ENCODE measurements at regions of chr6 and their contacts with region 1.

Region 1: DNA sequence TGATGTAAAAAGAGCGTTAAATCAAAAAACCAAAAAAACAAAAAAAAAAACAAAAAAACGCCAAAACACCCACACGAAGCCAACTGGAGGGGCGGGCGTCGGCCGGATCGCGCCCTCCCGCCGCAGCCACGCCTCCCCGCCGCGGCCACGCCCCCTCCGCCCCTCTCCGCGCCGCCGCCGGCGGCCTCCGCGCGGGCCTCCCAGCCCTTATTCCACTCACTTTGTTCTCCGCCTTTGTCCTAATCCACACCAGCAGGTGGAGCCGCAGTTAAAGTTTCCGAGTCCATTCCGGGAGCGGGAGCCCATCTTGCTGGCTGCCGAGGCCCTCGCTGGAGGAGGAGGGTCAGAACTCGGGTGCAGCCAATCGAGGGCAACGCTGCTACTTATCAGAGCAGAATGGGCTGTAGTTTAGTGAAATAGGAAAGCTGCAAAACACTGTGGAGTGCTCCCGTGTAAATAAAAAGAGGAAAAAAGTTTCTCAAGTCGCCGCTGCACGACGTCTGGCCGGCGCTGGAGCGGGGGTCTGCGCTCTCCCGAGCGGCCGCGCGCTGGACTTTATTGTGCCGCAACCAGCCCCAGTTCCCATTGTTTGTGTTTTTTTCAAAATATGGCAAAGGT is at the start of gene ASF1A:
- DNase-seq: peak; percentile 97
- ATAC-seq: peak; percentile 85
- H3K4me3 Mint-ChIP-seq: peak within 1 kb of the TSS; percentile 84
- H3K27ac Mint-ChIP-seq: peak within 1 kb of the TSS; percentile 98
- H3K4me1 Mint-ChIP-seq: peaks cover 50% of the 10 kb centered on the region
- H3K27me3 Mint-ChIP-seq: no peaks in the 10 kb centered on the region
- total RNA-seq, gene ASF1A: 21.2 to 28.6 TPM

Region 2: GRCh38 chr6:118283766-118284165 is 610.1 kb before region 1 on chr6:
- CTCF ChIA-PET with region 1: no interaction called
- POLR2A ChIA-PET with region 1: no interaction called
- intact Hi-C with region 1: loop called in 1 of 2 experiments (anchors 10 kb)
- DNase-seq: peak; percentile 65
- ATAC-seq: peak; percentile 61
- H3K4me3 Mint-ChIP-seq: no peak overlapping the region
- H3K27ac Mint-ChIP-seq: no peak overlapping the region
- H3K4me1 Mint-ChIP-seq: peaks cover 2% of the 10 kb centered on the region
- H3K27me3 Mint-ChIP-seq: peaks cover 4% of the 10 kb centered on the region

Region 3: DNA sequence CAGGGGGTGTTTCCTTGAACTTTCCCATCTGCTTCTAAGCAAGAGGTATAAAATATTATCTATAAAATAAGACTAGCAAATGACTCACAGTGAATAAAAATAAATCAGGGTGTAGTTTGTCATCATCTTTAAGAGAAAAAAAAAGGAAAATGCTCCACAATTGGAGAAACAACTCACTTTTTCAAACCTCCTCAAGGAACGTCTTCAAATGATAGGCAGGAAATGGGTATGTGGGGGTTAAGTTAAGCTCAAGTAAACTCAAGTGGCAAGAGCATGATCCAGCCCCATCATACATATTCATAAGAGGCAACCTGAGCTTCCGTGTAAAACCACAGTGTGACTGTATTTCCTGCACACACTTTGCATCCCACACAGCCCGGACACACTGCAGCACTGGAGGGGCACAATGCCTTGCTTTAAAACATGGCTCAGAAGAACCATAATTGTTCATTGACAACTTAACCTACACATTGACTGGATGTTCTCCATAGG is 184.0 kb before region 1 on chr6:
- CTCF ChIA-PET with region 1: interaction called, 6 read pairs
- POLR2A ChIA-PET with region 1: interaction called, 8 read pairs
- intact Hi-C with region 1: loop called (anchors 1 kb)
- DNase-seq: peak; percentile 87
- ATAC-seq: peak; percentile 81
- H3K4me3 Mint-ChIP-seq: peak overlapping the region; percentile 85
- H3K27ac Mint-ChIP-seq: peak overlapping the region; percentile 91
- H3K4me1 Mint-ChIP-seq: peaks cover 76% of the 10 kb centered on the region
- H3K27me3 Mint-ChIP-seq: no peaks in the 10 kb centered on the region

Region 4: DNA sequence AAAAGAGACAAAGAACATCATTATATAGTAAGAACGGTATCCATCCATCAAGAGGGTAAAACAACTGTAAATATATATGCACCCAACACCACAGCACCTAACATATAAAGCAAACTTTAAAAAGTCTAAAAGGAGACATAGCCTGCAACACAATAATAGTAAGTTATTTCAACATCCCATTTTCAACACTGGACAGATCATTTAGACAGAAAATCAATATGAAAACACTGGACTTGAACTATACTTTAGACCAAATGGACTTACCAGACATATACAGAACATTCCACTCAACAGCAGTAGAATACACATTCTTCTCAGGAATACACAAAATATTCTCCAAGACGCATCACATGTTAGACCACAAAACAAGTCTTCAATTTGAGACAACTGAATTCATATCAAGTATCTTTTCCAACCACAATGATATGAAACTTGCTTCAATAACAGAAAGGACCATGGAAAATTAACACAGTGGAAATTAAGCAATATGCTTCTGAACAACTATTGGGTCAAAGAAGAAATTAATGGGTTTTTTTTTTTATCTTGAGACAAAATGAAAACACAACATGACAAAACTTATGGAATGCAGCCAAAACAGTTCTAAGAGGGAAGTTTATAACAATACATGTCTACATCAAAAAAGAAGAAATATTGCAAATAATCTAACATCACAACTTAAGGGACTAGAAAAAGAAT is 23.9 kb before region 1 on chr6:
- CTCF ChIA-PET with region 1: interaction called, 3 read pairs
- POLR2A ChIA-PET with region 1: no interaction called
- intact Hi-C with region 1: loop called in 1 of 2 experiments (anchors 2 kb)
- DNase-seq: no peak
- ATAC-seq: peak; percentile 16
- H3K4me3 Mint-ChIP-seq: no peak overlapping the region
- H3K27ac Mint-ChIP-seq: no peak overlapping the region
- H3K4me1 Mint-ChIP-seq: peaks cover 30% of the 10 kb centered on the region
- H3K27me3 Mint-ChIP-seq: no peaks in the 10 kb centered on the region

Region 5: GRCh38 chr6:118921084-118921483 is 27.2 kb after region 1 on chr6:
- CTCF ChIA-PET with region 1: interaction called, 6 read pairs
- POLR2A ChIA-PET with region 1: interaction called, 13 read pairs
- intact Hi-C with region 1: no loop called
- DNase-seq: no peak
- ATAC-seq: no peak
- H3K4me3 Mint-ChIP-seq: no peak overlapping the region
- H3K27ac Mint-ChIP-seq: no peak overlapping the region
- H3K4me1 Mint-ChIP-seq: peaks cover 3% of the 10 kb centered on the region
- H3K27me3 Mint-ChIP-seq: no peaks in the 10 kb centered on the region

Region 6: DNA sequence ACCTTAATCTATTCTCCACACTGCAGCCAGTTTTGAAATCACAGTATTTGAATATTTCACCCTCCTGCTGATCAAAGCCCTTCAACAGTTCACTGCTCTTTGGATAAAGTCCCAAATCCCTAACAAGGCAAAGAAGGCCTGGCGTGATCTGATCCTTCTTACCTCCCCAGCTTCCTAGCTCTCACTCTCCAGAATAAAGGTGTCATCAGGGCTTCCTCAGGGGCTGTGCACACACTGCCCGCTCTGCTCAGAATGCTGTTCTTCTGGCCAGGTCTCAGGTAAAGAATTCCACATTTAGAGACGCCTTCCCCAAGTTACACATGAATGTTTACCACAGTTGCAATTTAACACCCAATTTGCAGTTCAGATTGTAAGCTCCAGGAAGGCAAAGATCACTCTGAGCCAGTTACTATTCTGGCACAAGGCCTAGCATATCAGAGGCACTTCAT is 99.9 kb after region 1 on chr6:
- CTCF ChIA-PET with region 1: no interaction called
- POLR2A ChIA-PET with region 1: no interaction called
- intact Hi-C with region 1: no loop called
- DNase-seq: no peak
- ATAC-seq: no peak
- H3K4me3 Mint-ChIP-seq: no peak overlapping the region
- H3K27ac Mint-ChIP-seq: no peak overlapping the region
- H3K4me1 Mint-ChIP-seq: peaks cover 6% of the 10 kb centered on the region
- H3K27me3 Mint-ChIP-seq: no peaks in the 10 kb centered on the region

Region 7: GRCh38 chr6:119110601-119111548 is 217.0 kb after region 1 on chr6:
- CTCF ChIA-PET with region 1: interaction called, 25 read pairs
- POLR2A ChIA-PET with region 1: no interaction called
- intact Hi-C with region 1: loop called (anchors 1 kb)
- DNase-seq: peak; percentile 51
- ATAC-seq: peak; percentile 86
- H3K4me3 Mint-ChIP-seq: no peak overlapping the region
- H3K27ac Mint-ChIP-seq: no peak overlapping the region
- H3K4me1 Mint-ChIP-seq: peaks cover 21% of the 10 kb centered on the region
- H3K27me3 Mint-ChIP-seq: no peaks in the 10 kb centered on the region

Measured in activated CD4-positive, alpha-beta T cell treated with anti-CD3 and anti-CD28 coated beads for 36 hours (primary cell).